ENCODE measurements at regions of chr1 and their contacts with region 1.

Region 1: DNA sequence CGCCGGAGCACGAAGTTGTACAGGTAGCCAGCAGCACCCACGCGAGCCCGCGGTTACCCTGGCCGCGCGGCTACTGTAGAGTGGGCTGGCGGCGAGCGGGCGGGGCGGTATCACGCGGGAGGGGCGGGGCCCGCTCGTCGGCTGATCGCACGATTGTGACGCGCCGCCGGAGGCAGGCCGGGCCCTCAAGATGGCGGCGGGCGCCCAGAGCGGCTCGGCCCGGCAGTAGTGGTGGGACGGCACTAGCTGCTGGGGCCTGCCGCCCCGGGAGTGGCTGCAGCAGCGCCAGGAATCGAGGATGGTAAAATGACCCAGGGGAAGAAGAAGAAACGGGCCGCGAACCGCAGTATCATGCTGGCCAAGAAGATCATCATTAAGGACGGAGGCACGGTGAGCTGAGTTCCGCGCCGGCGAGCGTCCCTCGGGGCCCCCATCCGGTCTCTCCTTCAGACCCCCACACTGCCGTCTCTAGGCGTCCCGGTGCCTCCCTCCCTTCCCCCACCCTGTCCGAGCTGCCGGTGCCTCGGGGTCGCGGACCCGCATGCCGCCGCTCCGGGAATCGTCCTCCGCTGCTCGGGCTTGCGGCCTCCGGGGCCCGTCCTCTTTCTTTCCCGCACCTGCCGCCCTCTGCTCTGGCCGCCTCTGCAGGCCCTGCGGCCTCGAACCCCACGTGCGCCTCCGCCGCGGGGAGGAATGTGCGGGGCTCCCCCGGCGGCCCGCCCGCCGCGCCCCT is 68.3 kb downstream of the SLC35A3 start:
- DNase-seq: peak; percentile 93
- H3K4me3 Mint-ChIP-seq: peak overlapping the region; percentile 97
- H3K27ac Mint-ChIP-seq: peak overlapping the region; percentile 100
- H3K4me1 Mint-ChIP-seq: peaks cover 54% of the 10 kb centered on the region
- H3K27me3 Mint-ChIP-seq: peaks cover 2% of the 10 kb centered on the region

Region 2: DNA sequence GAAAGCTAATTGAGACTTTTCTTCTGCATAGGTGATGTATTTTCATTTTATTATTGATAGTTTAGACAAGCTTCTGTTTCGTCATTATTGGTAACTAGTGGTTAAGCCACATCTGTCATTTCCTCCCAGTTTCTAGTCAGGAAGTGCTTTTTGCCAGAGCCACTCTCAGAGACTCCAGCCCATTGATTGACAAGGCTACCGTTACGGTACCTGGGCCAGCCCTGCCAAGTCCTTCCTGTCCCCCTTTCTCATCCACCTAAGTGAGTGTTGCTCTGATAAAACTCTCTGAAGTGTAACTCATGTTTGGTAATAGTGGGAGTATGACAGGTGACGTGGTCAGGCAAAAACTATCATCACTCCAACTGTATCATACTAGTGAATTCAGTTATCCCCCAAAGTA is 217.5 kb before region 1 on chr1:
- CTCF ChIA-PET with region 1: no interaction called
- POLR2A ChIA-PET with region 1: no interaction called
- intact Hi-C with region 1: loop called (anchors 2 kb)
- DNase-seq: peak; percentile 60
- H3K4me3 Mint-ChIP-seq: no peak overlapping the region
- H3K27ac Mint-ChIP-seq: peak overlapping the region; percentile 63
- H3K4me1 Mint-ChIP-seq: peaks cover 12% of the 10 kb centered on the region
- H3K27me3 Mint-ChIP-seq: no peaks in the 10 kb centered on the region

Region 3: DNA sequence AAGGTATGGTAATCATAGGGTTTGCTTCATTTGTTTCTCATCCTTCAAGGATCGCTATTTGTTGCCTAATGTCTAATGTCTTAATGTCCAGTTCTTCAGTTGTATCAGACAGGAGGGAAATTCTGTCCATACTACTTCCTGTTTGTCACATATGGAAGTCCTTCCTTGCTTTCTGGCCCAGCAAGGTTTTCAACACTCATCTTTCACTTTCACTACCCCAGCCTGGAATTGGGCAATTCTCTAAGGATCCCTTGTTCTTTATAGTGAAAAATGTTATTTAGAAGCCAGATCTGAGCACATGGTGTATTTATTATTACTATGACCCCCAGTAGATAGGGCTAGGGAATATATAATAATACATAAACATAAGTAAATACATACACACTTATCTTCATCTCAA is 118.9 kb before region 1 on chr1:
- CTCF ChIA-PET with region 1: no interaction called
- POLR2A ChIA-PET with region 1: no interaction called
- intact Hi-C with region 1: no loop called
- DNase-seq: no peak
- H3K4me3 Mint-ChIP-seq: no peak overlapping the region
- H3K27ac Mint-ChIP-seq: no peak overlapping the region
- H3K4me1 Mint-ChIP-seq: no peaks in the 10 kb centered on the region
- H3K27me3 Mint-ChIP-seq: no peaks in the 10 kb centered on the region

Region 4: GRCh38 chr1:99969729-99970621 is 68.1 kb before region 1 on chr1 and contains the start of gene SLC35A3:
- CTCF ChIA-PET with region 1: interaction called, 3 read pairs
- POLR2A ChIA-PET with region 1: interaction called, 12 read pairs
- intact Hi-C with region 1: loop called (anchors 1 kb)
- DNase-seq: peak; percentile 88
- H3K4me3 Mint-ChIP-seq: peak within 1 kb of the TSS; percentile 100
- H3K27ac Mint-ChIP-seq: peak within 1 kb of the TSS; percentile 88
- H3K4me1 Mint-ChIP-seq: peaks cover 18% of the 10 kb centered on the region
- H3K27me3 Mint-ChIP-seq: no peaks in the 10 kb centered on the region
- total RNA-seq, gene SLC35A3: 16.5 to 18.3 TPM

Region 5: DNA sequence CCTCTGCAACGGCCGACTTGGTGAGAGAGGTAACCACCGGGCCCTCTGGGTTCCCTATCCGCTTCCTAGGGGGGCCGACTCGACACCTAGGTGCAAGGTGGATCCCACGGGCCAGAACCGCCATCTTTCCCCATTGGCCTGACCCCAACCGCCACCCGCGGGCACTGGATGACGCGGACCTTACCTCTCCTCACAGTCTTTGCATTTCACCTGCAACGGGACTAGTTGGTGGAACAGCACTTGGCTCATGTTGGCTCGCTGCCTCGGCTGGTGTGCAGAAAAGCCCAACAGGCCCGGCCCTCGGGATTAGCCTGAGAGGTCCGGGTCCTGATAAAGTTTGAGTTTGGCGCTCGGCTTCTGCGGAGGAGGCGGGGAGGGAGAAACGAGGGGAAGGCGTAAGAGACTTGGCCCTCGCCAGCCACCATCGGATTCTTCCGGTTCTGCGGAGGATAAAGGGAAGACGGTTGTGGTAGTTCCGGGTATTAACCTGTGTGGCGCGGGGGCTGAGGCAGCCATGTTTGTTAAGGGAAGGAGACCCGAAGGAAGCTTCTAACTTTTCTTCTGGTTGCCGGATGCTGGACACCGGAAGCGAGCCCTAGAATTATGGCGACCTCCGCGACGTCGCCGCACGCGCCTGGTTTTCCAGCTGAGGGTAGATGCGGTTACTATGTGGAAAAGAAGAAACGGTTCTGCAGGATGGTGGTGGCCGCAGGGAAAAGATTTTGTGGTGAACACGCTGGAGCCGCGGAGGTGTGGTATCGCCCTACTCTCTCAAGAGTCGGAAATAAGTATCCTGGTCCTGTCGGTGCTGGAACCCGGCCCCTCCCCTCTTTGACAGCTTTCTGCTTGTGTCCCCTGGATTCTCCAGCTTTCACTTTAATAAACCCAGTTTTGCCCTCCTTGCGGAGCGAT is 94.7 kb after region 1 on chr1 and contains the starts of genes SASS6 and TRMT13:
- CTCF ChIA-PET with region 1: interaction called, 3 read pairs
- POLR2A ChIA-PET with region 1: interaction called, 6 read pairs
- intact Hi-C with region 1: loop called (anchors 1 kb)
- DNase-seq: peak; percentile 97
- H3K4me3 Mint-ChIP-seq: peak within 1 kb of the TSS; percentile 96
- H3K27ac Mint-ChIP-seq: peak within 1 kb of the TSS; percentile 93
- H3K4me1 Mint-ChIP-seq: peaks cover 39% of the 10 kb centered on the region
- H3K27me3 Mint-ChIP-seq: no peaks in the 10 kb centered on the region
- total RNA-seq, gene SASS6: 11.5 to 12.0 TPM
- total RNA-seq, gene TRMT13: 17.5 TPM

Region 6: DNA sequence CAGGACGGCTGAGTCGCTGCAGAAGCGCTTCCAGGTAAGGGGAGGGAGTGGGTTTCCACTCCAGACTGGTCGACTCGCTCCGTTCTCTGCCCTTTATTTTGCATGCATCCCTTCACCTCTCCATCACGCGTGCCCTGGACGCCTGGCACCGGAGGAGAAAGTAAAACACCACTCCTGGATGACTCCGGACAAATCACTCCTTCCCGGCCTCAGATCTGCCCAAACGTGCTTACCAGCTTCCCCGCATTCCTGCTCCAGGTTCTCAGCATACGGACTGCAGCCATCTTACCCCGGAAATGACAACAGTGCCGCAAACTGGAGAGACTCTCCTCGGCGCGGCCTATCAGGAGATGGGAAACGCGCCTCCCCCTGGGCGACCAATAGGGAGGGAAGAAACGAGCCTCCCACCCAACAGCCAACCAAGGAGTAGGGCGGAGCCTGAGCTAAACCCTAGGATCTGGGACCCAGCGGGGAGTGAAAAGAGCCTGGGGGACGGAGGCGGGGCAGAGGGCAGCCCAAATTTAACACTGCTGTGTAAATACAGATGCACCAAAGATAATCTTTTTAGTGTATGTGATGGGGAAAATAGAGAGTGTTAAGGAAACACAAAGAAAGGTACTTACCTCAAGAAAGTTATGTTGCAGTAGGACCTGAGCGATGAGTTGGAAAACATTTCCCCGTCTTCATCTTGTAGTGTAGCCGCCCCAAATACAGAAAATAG is 211.6 kb after region 1 on chr1 and contains the start of gene DBT:
- CTCF ChIA-PET with region 1: no interaction called
- POLR2A ChIA-PET with region 1: interaction called, 3 read pairs
- intact Hi-C with region 1: loop called (anchors 1 kb)
- DNase-seq: peak; percentile 96
- H3K4me3 Mint-ChIP-seq: no peak within 1 kb of the TSS
- H3K27ac Mint-ChIP-seq: no peak within 1 kb of the TSS
- H3K4me1 Mint-ChIP-seq: peaks cover 21% of the 10 kb centered on the region
- H3K27me3 Mint-ChIP-seq: no peaks in the 10 kb centered on the region
- total RNA-seq, gene DBT: 11.4 to 11.7 TPM

Region 7: DNA sequence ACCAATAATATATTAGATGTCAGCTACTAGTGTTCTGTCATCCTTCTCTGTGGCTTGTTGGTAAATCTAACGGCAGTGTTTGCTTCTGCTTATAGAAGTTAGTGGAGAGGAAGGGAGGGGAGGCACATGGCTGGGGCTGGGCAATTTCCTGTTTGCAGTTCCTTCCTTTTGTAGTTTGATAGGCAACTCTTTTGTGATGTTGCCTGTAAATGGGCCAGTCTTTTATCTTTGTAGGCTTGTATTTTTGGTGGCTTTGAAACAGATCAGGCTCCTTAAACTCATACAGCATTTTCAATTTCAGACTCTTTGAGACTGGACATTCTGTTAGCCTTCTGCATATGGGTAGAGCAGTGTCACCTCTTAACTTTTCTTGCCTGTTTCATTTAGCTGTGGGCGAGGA is 362.3 kb after region 1 on chr1:
- CTCF ChIA-PET with region 1: no interaction called
- POLR2A ChIA-PET with region 1: interaction called, 3 read pairs
- intact Hi-C with region 1: loop called (anchors 2 kb)
- DNase-seq: peak; percentile 67
- H3K4me3 Mint-ChIP-seq: peak overlapping the region; percentile 53
- H3K27ac Mint-ChIP-seq: peak overlapping the region; percentile 91
- H3K4me1 Mint-ChIP-seq: peaks cover 83% of the 10 kb centered on the region
- H3K27me3 Mint-ChIP-seq: no peaks in the 10 kb centered on the region

Region 8: GRCh38 chr1:100895540-100896483 is 857.7 kb after region 1 on chr1 and contains the start of gene SLC30A7:
- CTCF ChIA-PET with region 1: no interaction called
- POLR2A ChIA-PET with region 1: interaction called, 5 read pairs
- intact Hi-C with region 1: loop called (anchors 2 kb)
- DNase-seq: peak; percentile 98
- H3K4me3 Mint-ChIP-seq: peak within 1 kb of the TSS; percentile 99
- H3K27ac Mint-ChIP-seq: peak within 1 kb of the TSS; percentile 100
- H3K4me1 Mint-ChIP-seq: peaks cover 40% of the 10 kb centered on the region
- H3K27me3 Mint-ChIP-seq: no peaks in the 10 kb centered on the region
- total RNA-seq, gene SLC30A7: 40.0 to 43.4 TPM